Common myeloid progenitor, CD34-positive (primary cell): ENCODE measurements at regions of chr10 and their contacts with region 1.

Region 1: DNA sequence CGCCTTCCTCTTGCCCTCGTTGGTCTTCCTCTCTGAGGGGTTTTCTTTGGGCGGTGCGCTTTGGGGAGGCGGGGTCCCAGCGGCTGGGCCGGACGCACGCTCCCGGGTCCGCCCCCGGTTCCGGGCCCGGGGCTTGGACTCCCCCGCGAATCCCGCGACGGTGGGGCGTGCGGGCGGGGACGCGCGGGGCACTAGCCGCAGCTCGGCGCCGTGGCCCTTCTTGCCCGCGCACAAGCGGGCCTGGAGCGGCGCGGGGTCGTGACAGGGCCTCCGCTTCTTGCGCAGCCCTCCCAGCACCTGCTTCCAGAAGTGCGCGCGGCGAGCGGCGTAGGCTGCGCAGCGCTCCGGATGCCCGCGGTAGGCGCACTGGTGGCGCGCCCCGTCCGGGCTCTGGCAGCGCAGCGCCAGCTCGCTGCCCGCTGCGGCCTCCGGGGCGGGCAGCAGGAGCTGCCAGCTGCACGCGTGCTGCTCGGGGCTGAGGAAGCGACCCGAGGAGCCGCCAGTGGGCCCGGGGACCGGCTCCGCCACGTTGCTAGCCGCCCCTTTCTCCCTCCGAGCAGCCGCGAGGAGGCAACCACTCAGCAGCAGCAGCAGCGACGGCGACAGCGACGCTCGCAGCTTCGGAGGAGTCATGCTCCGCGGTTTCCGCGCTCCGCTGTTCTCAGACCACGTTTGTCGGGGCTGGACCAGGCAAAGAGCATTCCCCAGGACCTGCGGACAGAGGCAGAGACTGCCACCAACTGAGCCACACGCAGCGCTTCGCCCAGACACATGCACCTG is 759 bp downstream of the FGFBP3 start:
- DNase-seq: peak; percentile 83 to 93 (median 90)
- H3K4me3 ChIP-seq: peak overlapping the region; percentile 80 to 97 (median 84)
- H3K27ac ChIP-seq: peak overlapping the region; percentile 32 to 40
- H3K4me1 ChIP-seq: peaks cover 3 to 19% (median 13%) of the 10 kb centered on the region in 4 experiments
- H3K27me3 ChIP-seq: peaks cover 0 to under 1% (median 0%) of the 10 kb centered on the region in 5 experiments

Region 2: DNA sequence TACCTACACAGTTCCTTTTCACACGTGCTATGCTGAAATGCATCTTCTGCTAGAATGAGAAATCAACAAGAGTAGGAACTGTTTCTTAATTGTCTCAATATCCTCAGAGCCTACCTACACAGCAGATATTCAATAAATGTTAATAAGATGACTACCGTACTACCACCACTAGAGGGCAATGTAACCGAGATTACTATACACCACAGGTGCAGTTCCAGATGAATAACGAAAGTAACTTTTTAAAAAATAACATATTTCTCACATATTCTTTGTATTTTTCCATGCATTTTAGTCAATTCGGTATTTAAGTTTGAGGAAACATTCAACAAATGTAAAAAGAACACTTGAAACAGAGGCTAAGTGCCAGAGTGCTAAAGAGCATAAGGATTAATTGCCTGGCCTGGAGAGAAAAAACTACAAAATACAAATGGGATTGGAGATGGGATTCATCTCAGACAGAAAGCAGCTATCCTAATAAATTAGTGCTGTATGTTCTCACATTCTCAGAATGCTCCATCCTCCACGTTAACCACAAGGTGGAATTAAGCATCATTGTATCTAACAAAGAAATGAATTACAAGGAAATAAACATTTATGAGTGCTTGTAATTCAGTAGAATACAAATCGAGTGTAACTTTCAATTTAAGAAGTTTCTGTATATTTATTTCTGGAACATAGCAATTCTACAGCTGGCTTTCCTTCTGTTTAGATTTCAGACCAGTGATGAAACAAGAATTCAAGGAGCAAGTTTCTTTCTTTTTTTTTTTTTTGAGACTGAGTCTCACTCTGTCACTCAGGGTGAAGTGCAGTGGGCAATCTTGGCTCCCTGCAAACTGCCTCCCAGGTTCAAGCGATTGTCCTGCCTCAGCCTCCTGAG is 518.7 kb before region 1 on chr10:
- CTCF ChIA-PET with region 1: interaction called, 11 read pairs
- POLR2A ChIA-PET with region 1: interaction called, 5 read pairs
- DNase-seq: peak; percentile 63 to 84 (median 82)
- H3K4me3 ChIP-seq: peak overlapping the region in 1 of 7 experiments; percentile 55
- H3K27ac ChIP-seq: no peak overlapping the region
- H3K4me1 ChIP-seq: peaks cover 0 to 3% (median 0%) of the 10 kb centered on the region in 4 experiments
- H3K27me3 ChIP-seq: peaks cover 2 to 29% (median 9%) of the 10 kb centered on the region in 5 experiments

Region 3: GRCh38 chr10:91758303-91759146 is 150.0 kb before region 1 on chr10:
- CTCF ChIA-PET with region 1: interaction called, 15 read pairs
- POLR2A ChIA-PET with region 1: no interaction called
- DNase-seq: peak; percentile 74 to 84 (median 83)
- H3K4me3 ChIP-seq: no peak overlapping the region
- H3K27ac ChIP-seq: no peak overlapping the region
- H3K4me1 ChIP-seq: no peaks in the 10 kb centered on the region
- H3K27me3 ChIP-seq: peaks cover 0 to 7% (median 0%) of the 10 kb centered on the region in 5 experiments

Region 4: DNA sequence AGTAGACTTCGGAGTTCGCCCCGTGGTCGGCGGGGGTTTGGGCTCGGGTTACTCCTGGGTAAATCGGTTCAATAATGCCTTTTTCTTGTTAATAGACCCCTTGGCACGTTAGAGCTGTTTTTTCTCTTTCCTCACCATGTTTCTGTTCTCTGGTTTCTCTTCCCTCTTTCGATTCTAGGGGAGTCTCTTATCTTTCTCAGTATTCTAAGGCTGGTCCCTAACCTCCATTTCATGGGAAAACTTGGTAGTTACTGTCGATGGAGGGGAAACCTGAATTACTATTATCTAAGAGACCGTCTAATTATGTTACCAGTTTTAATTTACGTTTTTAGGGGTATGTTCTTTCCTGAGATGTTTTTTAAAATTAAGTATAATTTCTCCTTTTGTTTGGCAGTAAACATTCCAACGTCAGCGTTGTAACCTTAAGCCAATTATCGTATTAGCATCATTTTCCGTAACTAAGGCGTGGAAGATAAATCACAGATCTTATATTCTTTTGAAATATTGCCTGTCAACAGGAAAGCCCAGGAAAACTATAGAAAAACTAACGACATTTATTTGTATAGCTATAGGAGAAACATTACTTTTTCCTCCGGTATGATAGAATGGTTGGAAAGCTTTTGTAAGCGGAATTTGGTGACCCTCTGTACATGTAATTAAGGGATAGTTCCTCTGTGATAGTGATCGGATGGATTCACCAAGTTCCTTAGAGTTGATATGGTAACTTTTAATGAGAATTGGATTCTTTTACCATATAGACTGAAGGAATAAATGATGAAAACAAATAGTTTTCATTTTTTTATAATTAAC is 15.9 kb after region 1 on chr10:
- CTCF ChIA-PET with region 1: interaction called, 15 read pairs
- POLR2A ChIA-PET with region 1: no interaction called
- DNase-seq: no peak
- H3K4me3 ChIP-seq: peak overlapping the region; percentile 77 to 99 (median 96)
- H3K27ac ChIP-seq: peak overlapping the region; percentile 92 to 97
- H3K4me1 ChIP-seq: peaks cover 6 to 16% (median 11%) of the 10 kb centered on the region in 4 experiments
- H3K27me3 ChIP-seq: no peaks in the 10 kb centered on the region

Region 5: GRCh38 chr10:92087750-92088395 is 179.3 kb after region 1 on chr10:
- CTCF ChIA-PET with region 1: no interaction called
- POLR2A ChIA-PET with region 1: no interaction called
- DNase-seq: peak; percentile 87 to 93 (median 93)
- H3K4me3 ChIP-seq: no peak overlapping the region
- H3K27ac ChIP-seq: no peak overlapping the region
- H3K4me1 ChIP-seq: no peaks in the 10 kb centered on the region
- H3K27me3 ChIP-seq: no peaks in the 10 kb centered on the region

Region 6: DNA sequence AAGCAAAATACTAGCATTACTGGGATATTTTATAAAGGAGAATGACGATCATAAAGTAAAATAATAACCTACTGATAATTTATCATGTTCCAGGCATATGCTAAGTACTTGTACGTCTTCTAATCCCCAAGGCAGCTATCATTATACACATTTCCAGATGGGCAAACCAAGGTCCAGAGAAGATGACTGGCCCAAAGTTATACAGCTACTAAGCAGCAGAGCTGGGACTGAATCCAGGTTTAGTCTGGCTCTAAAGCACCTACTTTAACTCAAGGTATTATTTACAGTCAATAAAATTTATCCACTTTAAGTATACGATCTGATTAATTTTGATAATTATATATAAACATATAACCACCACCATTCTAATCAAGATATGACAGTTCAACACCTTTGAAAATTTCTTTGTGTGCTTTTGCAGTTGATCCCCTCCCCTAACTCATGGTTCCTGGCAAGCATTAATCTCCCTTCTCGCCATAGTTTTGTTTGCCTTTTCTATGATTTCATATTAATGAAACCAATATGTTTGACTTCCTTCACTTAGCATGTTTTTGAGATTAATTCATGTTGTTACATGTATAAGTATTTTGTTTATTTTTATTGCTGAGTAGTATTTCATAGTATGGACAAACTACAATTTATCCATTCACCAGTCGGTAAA is 255.6 kb after region 1 on chr10:
- CTCF ChIA-PET with region 1: no interaction called
- POLR2A ChIA-PET with region 1: no interaction called
- DNase-seq: no peak
- H3K4me3 ChIP-seq: no peak overlapping the region
- H3K27ac ChIP-seq: no peak overlapping the region
- H3K4me1 ChIP-seq: no peaks in the 10 kb centered on the region
- H3K27me3 ChIP-seq: no peaks in the 10 kb centered on the region